ENCODE measurements at regions of chr11 and their contacts with region 1.

Region 1: DNA sequence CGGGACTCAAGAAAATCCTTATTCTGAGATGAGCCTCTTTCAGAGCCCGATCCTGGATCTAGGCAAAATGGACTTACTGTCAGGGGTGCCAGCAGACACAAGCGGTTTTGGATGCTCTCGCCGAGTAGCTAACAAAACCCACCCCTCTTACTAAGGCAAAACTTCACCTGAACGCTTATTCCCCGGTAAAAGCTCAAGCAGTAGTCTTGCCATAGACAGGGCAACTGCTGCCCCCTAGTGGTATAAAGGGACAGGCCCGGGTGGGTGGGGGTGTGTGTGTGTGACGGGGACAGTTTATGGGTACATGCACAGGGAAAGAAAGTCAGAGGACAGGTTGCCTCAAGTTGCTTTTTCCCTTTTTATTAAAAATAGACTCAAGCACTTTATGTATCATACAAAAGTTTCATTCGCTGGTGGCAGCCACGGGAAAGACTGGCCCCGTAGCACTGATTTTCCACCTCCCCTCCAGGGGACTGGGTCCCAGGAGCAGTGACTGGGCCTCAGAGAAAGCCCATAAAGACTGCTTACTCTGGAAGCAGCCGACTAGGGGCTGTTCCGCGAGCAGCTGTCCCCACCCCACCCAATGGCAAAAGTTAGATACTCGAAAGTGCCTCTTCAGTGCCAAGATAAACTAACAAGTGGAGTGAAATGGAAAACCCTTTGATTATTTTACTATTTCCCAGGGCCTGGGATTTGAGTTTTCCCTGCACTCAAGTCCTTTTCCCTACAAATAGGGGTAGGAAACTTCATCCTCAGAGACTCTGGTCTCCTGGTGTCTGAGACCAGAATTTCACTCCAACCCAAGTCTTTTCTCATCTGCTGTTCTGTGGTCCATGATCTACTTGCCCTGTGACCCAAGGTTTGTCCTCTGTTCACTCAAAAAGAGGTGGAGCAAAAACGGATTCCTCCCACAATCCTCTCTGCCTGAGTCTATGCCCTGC is 4.7 kb downstream of the YPEL4 start:
- DNase-seq: peak; percentile 82
- CTCF ChIP-seq: peak; percentile 65

Region 2: GRCh38 chr11:57499413-57499982 is 145.5 kb before region 1 on chr11:
- CTCF ChIA-PET with region 1: interaction called, 158 read pairs
- POLR2A ChIA-PET with region 1: no interaction called
- DNase-seq: peak; percentile 81
- CTCF ChIP-seq: no peak

Region 3: DNA sequence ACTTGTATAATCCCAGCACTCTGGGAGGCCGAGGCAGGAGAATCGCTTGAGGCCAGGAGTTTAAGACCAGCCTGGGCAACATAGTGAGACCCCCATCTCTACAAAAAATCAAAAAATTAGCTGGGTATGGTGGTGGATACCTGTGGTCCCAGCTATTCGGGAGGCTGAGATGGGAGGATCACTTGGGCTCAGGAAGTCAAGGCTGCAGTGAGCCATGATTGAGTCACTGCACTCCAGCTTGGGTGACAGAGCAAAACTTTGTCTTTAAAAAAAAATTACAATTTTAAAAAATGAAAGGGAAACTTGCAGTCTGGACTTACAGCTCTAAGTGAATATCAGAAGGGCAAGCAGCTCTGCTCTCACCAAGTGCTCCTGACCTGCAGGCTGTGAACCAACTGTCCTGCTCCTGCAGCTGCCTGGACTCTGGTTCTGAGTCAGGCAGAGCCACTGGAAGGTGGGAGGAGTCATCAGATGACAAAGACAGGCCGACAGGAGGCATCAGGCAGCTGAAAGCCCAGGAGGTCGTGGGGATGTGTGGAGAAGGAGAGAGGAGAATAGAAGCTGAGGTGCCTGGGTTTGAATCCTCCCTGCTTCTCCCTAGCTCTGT is 98.0 kb before region 1 on chr11:
- CTCF ChIA-PET with region 1: interaction called, 12 read pairs
- POLR2A ChIA-PET with region 1: no interaction called
- DNase-seq: peak; percentile 73
- CTCF ChIP-seq: no peak

Region 4: GRCh38 chr11:57596266-57596885 is 48.6 kb before region 1 on chr11:
- CTCF ChIA-PET with region 1: interaction called, 11 read pairs
- POLR2A ChIA-PET with region 1: no interaction called
- DNase-seq: no peak
- CTCF ChIP-seq: no peak

Region 5: GRCh38 chr11:57657194-57658022 is 12.4 kb after region 1 on chr11 and contains the start of gene CLP1:
- CTCF ChIA-PET with region 1: interaction called, 27 read pairs
- POLR2A ChIA-PET with region 1: no interaction called
- DNase-seq: peak; percentile 96
- CTCF ChIP-seq: no peak

Measured in GM10248 (cell line).